Body of pancreas (tissue), 4 donors: ENCODE measurements at regions of chr1 and their contacts with region 1.

Region 1: GRCh38 chr1:202716654-202717053 is 6.4 kb upstream of the SYT2 start:
- DNase-seq: no peak
- ATAC-seq: no peak
- H3K4me3 ChIP-seq: no peak overlapping the region
- H3K27ac ChIP-seq: no peak overlapping the region
- H3K4me1 ChIP-seq: no peaks in the 10 kb centered on the region
- H3K27me3 ChIP-seq: no peaks in the 10 kb centered on the region
- CTCF ChIP-seq: no peak
- POLR2A ChIP-seq: no peak

Region 2: DNA sequence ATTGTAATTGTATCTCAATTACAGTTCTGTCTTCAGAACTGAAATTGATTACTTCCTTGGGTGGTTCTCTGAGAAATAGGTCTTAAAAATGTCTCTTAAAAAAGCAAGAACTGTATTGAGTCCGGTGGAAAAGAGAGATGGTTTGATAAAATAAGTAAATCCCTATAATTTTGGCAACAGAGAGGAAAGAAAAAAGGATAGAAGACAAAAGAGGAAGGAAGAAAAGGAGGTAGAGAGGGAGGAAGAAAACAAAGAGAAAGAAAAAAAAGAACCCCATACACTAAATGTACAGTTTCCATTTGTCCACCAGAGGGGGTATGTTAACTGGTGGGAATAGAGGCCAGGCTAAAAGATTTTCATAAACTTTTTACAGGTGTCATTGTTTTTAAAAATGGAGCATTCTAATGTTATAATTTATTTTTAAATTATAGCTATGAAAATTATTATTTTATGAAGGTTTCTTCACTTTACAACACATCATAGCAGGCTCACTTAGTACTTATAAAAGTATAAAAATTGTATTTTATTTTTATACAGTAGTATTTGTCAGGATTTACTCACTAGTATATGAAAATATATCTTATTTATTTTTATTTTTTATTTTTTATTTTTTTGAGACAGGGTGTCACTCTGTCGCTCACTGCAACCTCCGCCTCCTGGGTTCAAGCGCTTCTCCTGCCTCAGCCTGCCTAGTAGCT is 372.9 kb before region 1 on chr1:
- intact Hi-C with region 1: loop called (anchors 5 kb)
- DNase-seq: no peak
- ATAC-seq: no peak
- H3K4me3 ChIP-seq: no peak overlapping the region
- H3K27ac ChIP-seq: no peak overlapping the region
- H3K4me1 ChIP-seq: peaks cover 4% of the 10 kb centered on the region
- H3K27me3 ChIP-seq: no peaks in the 10 kb centered on the region
- CTCF ChIP-seq: peak; percentile 19 to 87 (median 76)
- POLR2A ChIP-seq: no peak

Region 3: DNA sequence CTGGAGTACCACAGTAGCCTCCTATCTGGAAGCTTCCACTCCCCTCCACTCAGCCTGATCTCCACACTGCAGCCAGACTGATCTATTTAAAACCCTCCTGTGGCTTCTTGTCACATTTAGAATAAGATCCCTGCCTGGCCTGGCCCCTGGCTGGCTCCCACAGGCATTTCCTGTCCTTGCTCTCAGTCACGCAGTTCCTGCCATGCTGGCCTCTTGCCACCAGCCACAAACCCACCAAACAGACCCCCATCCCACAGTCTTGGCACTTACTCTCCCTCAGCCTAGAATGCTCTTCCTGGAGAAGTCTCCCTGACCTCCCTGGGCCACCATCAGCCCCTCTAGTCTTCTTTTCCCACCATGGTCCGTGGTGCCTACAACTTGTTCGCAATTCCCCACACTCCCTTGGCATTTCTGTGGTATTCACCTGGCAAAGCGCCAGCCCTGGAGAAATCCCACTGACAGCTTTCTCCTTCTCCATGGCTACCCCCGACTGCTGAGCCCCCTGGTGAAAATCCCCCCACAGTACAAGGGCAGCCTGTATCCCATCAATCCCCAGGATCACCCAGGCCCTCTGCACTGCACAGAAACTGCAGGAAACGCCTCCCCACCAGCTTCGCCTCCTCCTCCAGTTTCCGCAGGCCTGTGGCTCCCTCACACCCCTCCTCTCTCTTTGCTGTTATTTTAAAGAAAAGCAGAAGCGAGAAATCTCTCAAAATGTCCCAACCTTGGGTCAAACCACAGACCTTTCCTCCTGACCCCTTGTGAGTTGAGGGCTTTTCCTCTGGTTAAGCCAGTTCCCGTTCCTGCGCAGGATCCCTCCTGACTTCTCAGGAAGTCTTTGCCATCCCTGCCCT is 100.9 kb before region 1 on chr1:
- intact Hi-C with region 1: no loop called
- DNase-seq: peak in 1 of 4 donors; percentile 46
- ATAC-seq: no peak
- H3K4me3 ChIP-seq: no peak overlapping the region
- H3K27ac ChIP-seq: no peak overlapping the region
- H3K4me1 ChIP-seq: peaks cover 15% of the 10 kb centered on the region
- H3K27me3 ChIP-seq: no peaks in the 10 kb centered on the region
- CTCF ChIP-seq: no peak
- POLR2A ChIP-seq: no peak